Right ventricle myocardium inferior (tissue), 1 donor: ENCODE measurements at regions of chr5 and their contacts with region 1.

Region 1: DNA sequence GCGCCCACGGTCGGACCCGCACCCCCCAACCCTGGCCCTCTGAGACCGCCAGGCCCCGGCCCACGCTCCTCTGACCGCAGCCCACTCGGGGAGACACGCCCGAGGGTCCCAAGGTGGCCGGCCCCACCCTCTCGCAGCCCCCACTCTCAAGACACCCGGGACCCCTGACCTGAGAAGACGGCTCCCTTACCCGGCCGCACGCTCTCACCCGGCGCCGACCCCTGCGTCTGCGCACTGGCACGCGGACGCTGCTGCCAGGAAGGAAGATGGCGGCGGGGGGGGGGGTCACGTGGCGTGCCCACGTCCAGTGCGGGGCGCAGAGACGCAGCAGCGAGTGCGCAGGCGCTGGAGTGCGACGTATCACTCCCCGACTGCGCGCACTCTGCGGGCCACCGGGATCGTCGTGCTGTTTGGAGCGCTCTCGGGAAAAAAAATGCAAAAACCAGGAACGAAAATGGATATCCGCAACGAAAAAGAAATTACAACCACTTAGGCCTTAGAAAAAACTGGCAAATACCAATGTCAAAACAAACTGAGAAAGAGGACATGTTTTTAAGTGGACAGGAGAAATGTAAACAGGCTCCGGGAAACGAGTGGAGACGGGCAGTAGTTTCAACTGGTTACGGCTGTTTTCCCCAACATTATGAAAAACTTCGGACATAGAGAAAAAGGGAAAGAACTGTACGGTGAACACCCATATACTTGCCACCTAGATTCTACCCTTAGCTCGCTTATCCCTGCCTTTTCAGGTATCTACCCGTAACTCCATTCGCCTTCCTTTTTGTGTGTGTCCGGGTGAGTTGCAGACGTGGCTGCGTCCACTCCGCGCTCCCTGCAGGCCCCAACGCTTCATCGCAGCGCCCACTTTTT is at the start of gene MRPL36:
- DNase-seq: peak; percentile 98
- ATAC-seq: peak; percentile 93
- total RNA-seq, gene MRPL36: 62.3 TPM

Region 2: GRCh38 chr5:1718669-1719068 is 81.2 kb before region 1 on chr5:
- intact Hi-C with region 1: no loop called
- DNase-seq: no peak
- ATAC-seq: no peak

Region 3: GRCh38 chr5:1840741-1841521 is 41.1 kb after region 1 on chr5:
- intact Hi-C with region 1: loop called (anchors 2 kb)
- DNase-seq: peak; percentile 72
- ATAC-seq: peak; percentile 83

Region 4: DNA sequence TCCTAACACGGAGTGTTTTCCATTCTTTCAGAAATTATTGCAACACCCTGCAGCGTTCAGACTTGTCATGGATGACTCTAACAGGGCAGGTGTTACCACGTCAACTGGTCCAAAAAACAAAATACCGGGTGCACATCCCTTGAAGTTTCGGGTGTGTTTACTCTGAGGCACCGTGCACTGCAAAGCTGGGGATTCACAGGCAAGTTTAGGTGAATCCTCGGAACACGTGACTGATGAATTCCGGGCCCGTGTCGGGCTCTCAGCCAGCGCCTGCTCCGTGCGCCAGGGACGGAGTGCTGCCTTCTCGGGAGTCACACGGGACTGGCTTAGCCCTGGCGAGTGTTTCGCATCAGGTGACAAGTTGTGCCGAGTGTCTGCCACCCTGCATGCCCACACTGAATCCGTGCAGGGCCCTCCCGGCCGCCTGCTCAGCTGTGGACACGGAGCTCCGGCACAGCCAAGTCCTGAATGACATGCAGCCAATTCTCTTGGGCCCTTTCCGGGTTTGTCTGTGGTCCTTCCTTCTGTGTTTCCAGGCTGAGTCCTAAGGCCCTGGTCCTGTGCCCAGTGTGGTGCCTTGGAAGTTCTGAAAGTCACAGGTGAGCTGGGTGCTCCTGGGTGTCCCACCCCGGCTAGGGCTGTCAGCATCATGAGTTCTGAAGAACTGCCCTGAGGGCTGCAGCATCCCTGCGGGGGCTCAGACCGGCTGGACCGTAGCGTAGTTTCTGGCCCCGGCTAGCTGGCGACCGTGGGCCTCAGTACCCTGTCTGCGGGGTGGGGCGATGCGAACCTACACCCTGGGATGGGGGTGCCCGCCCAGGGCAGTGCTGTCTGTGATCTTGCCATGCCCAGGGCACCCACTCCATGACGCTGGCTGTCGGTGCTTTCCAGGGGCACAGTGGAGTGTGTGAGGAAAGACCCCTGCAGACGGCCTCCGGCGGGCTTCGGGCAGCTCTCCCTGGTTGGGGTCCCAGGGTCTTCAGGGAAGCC is 149.1 kb after region 1 on chr5:
- intact Hi-C with region 1: loop called (anchors 2 kb)
- DNase-seq: peak; percentile 79
- ATAC-seq: peak; percentile 91